GM12878 (cell line): ENCODE measurements at regions of chr11 and their contacts with region 1.

Region 1: GRCh38 chr11:58788355-58789023 is 56.0 kb downstream of the GLYATL2 start:
- DNase-seq: peak; percentile 7
- ATAC-seq: peak; percentile 98
- H3K4me3 ChIP-seq: no peak overlapping the region
- H3K27ac ChIP-seq: no peak overlapping the region
- H3K4me1 ChIP-seq: no peaks in the 10 kb centered on the region
- H3K27me3 ChIP-seq: no peaks in the 10 kb centered on the region; a peak in 1 of 4 replicates
- CTCF ChIP-seq: peak; percentile 88 to 94 (median 88); a peak in 5 of 6 replicates
- EP300 ChIP-seq: no peak
- POLR2A ChIP-seq: no peak
- RAD21 ChIP-seq: peak; percentile 94

Region 2: DNA sequence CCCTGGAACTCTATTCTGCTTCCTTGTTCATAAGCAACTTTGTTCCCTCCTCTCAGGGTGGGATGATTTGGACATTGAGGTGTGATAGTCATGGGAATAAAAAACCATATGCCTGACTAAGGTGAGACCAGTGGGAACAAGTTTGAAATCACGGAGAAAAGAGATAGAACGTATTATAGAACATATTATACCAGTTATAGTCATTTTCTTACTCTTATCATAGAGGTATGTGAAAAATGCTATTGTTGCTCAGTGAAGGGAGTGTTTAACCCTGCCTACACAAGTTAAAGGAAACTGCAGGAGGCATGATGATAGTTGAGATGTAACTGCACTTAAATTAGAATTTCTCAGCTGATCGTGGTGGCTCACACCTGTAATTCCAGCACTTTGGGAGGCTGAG is 742.3 kb before region 1 on chr11:
- CTCF ChIA-PET with region 1: no interaction called
- POLR2A ChIA-PET with region 1: no interaction called
- RAD21 ChIA-PET with region 1: no interaction called
- SMC1A ChIA-PET with region 1: no interaction called
- in situ Hi-C with region 1: no loop called
- intact Hi-C with region 1: no loop called
- DNase-seq: no peak
- ATAC-seq: no peak
- H3K4me3 ChIP-seq: no peak overlapping the region
- H3K27ac ChIP-seq: no peak overlapping the region
- H3K4me1 ChIP-seq: no peaks in the 10 kb centered on the region
- H3K27me3 ChIP-seq: no peaks in the 10 kb centered on the region
- CTCF ChIP-seq: no peak
- EP300 ChIP-seq: no peak
- POLR2A ChIP-seq: no peak
- RAD21 ChIP-seq: no peak

Region 3: DNA sequence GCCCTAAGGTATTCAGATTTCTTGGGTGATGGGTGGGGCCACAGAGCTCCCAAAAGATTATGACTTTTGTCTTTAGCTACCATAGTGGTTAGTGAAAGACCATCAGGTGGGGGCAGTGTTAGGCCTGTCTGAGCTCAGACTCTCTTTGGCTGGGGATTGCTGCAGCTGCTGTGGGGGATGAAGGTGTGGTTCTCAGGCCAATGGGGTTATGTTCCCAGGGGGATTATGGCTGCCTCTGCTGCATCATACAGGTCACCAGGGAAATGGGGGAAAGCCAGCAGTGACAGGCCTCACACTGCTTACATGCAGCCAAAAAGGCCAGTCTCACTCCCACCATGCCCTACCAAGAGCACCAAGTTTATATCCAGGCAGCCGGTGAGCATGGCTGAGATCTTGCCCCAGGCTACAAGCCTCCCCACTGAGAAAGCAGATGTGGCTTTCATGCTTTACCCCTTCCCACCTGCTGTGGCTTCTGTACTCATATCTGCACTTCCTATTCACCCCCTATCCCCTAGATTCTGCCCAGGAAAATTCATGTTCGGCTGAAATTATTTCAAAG is 141.3 kb before region 1 on chr11:
- CTCF ChIA-PET with region 1: interaction called, 13 read pairs
- POLR2A ChIA-PET with region 1: no interaction called
- RAD21 ChIA-PET with region 1: interaction called, 12 read pairs
- SMC1A ChIA-PET with region 1: interaction called, 10 read pairs
- in situ Hi-C with region 1: loop called (anchors 5 kb)
- intact Hi-C with region 1: no loop called
- DNase-seq: peak; percentile 48
- ATAC-seq: peak; percentile 93
- H3K4me3 ChIP-seq: no peak overlapping the region
- H3K27ac ChIP-seq: peak overlapping the region; percentile 40; the same call in 1 of the 2 replicates
- H3K4me1 ChIP-seq: peaks cover 10% of the 10 kb centered on the region
- H3K27me3 ChIP-seq: no peaks in the 10 kb centered on the region
- CTCF ChIP-seq: peak in 2 of 3 experiments; percentile 21 to 40; a peak in 3 of 6 replicates
- EP300 ChIP-seq: peak; percentile 66 to 72; a peak in 2 of 4 replicates
- POLR2A ChIP-seq: no peak
- RAD21 ChIP-seq: peak; percentile 57; the same call in 1 of the 2 replicates

Region 4: DNA sequence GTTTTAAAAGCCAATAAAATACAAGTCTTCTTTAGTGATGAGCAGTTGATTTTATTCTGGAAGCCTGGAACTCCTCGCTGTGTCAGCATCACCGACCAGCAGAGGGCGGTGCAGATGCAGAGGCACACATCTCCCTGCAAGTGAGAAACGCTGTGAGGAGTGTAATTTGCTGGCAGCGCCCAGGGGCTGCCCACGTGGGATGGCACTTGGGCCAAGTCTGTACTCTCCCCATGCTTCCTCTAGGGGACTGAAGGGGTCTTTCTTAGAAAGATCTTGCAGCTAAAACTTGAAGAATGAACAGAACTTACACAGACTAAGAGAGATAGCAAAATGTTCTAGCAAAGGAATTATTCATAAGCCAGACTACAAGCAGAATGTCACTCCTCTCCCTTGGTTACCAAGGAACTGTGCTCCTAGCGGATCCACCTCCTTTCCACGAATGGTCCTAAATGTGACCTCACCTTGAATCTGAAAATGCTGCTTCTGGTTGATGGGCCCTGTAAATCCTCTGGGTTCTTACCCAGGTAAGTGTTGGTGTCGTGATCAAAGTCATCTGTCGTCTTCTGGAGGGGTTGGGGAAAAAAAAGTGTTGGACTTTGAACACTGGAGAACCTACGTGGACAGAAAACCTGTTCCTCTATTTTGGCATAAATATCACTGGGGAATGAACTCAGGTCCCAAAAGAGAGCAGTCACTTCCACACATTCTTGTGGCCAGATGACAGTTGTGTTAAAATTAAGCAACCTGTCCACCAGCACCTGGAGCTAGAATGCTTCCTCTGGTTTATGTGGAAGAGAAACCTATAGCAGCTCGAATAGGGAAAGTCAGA is 134.2 kb before region 1 on chr11:
- CTCF ChIA-PET with region 1: interaction called, 12 read pairs
- POLR2A ChIA-PET with region 1: no interaction called
- RAD21 ChIA-PET with region 1: interaction called, 5 read pairs
- SMC1A ChIA-PET with region 1: interaction called, 4 read pairs
- in situ Hi-C with region 1: loop called (anchors 5 kb)
- intact Hi-C with region 1: loop called (anchors 1 kb)
- DNase-seq: peak; percentile 38
- ATAC-seq: peak; percentile 98
- H3K4me3 ChIP-seq: no peak overlapping the region
- H3K27ac ChIP-seq: no peak overlapping the region
- H3K4me1 ChIP-seq: peaks cover 4% of the 10 kb centered on the region; the same call in 1 of the 2 replicates
- H3K27me3 ChIP-seq: no peaks in the 10 kb centered on the region
- CTCF ChIP-seq: peak; percentile 89 to 90 (median 89)
- EP300 ChIP-seq: no peak
- POLR2A ChIP-seq: no peak
- RAD21 ChIP-seq: peak; percentile 76

Region 5: DNA sequence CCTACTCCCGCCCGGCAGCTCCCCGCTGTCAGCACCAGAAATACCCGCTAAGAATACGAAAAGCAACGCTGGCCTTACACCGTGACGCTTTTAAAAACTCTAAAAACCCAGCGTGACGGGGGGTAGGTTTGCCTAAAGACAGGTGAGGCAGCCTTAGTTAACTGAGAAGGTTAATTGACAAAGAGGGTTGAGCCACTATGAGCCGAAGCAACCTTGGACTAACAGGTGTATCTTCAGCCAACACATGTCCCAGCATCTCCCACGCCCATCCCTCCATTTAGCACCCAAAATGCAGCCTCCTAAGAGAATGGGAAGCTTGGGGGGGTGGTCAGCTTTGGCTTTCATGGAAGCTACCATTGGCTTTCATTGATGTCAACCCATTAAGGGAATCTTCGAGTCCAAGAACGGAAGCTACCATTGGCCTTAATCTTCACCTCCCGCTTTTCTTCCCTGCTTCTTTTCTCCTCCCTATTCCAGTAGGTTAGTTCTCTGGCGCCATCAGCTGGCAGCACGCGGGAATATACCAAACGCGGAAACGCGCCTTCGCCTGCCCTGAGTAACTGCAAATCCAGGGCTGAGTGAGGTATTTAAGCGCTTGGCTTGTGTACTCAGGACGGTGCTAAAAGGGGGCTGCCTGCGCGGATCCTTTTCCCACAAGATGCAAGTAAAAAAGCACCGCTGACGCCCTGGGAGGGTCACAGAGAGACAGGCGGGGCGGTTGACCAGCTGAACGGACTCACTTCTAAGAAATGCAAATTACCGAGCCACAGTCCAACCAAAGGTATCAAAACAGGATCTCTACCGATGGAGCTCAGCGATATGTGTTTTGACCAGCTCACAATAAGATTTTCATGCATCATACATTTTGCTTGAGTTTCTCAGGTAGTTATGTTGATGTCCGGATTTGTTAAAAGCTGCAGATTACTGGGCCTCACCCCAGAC is 112.3 kb after region 1 on chr11:
- CTCF ChIA-PET with region 1: no interaction called
- POLR2A ChIA-PET with region 1: no interaction called
- RAD21 ChIA-PET with region 1: interaction called, 3 read pairs
- SMC1A ChIA-PET with region 1: no interaction called
- in situ Hi-C with region 1: no loop called
- intact Hi-C with region 1: loop called (anchors 5 kb)
- DNase-seq: peak; percentile 16
- ATAC-seq: peak; percentile 90
- H3K4me3 ChIP-seq: no peak overlapping the region
- H3K27ac ChIP-seq: no peak overlapping the region
- H3K4me1 ChIP-seq: no peaks in the 10 kb centered on the region
- H3K27me3 ChIP-seq: peaks cover 1 to 7% of the 10 kb centered on the region in 2 experiments
- CTCF ChIP-seq: peak; percentile 51 to 66 (median 62); a peak in 5 of 6 replicates
- EP300 ChIP-seq: no peak
- POLR2A ChIP-seq: no peak
- RAD21 ChIP-seq: peak; percentile 52; the same call in 1 of the 2 replicates